HCT116 (cell line): ENCODE measurements at regions of chr5 and their contacts with region 1.

Region 1: DNA sequence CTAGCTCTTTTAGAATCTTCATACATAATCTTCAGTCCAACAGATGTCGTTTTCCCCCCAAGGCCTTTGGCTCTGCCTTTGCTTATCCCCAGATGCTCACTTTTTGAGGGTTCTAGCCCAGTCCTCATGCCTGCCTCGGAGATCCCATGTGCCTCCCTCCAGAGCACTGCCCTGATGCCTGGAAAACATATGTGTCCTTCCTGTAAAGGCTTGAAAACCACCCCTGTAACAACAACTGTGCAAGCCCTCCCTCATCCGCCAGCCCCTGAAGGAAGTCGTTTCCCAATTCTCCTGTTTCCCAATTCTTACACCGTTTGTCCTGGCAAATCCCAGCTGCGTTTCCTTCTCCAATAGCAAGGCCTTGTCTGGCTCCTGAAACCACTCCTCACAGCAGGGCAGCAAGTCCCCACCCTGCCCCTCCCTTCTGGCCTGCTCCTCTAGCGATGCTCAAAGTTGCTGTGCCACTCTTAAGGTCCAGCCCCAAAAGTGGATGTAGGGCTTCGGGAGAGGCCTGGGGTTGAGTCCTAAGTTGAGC is 52.2 kb downstream of the SLC36A1 start:
- DNase-seq: no peak
- ATAC-seq: no peak
- H3K4me3 ChIP-seq: no peak overlapping the region
- H3K27ac ChIP-seq: no peak overlapping the region
- H3K4me1 ChIP-seq: peaks cover 0 to 2% of the 10 kb centered on the region in 2 experiments; a peak in 1 of 4 replicates
- H3K27me3 ChIP-seq: no peaks in the 10 kb centered on the region
- CTCF ChIP-seq: no peak
- POLR2A ChIP-seq: no peak
- RAD21 ChIP-seq: no peak

Region 2: GRCh38 chr5:151280443-151280842 is 219.1 kb before region 1 on chr5:
- CTCF ChIA-PET with region 1: no interaction called
- POLR2A ChIA-PET with region 1: no interaction called
- RAD21 ChIA-PET with region 1: no interaction called
- intact Hi-C with region 1: loop called (anchors 1 kb)
- DNase-seq: no peak
- ATAC-seq: no peak
- H3K4me3 ChIP-seq: no peak overlapping the region
- H3K27ac ChIP-seq: no peak overlapping the region
- H3K4me1 ChIP-seq: no peaks in the 10 kb centered on the region; a peak in 1 of 4 replicates
- H3K27me3 ChIP-seq: no peaks in the 10 kb centered on the region
- CTCF ChIP-seq: no peak
- POLR2A ChIP-seq: no peak
- RAD21 ChIP-seq: no peak

Region 3: DNA sequence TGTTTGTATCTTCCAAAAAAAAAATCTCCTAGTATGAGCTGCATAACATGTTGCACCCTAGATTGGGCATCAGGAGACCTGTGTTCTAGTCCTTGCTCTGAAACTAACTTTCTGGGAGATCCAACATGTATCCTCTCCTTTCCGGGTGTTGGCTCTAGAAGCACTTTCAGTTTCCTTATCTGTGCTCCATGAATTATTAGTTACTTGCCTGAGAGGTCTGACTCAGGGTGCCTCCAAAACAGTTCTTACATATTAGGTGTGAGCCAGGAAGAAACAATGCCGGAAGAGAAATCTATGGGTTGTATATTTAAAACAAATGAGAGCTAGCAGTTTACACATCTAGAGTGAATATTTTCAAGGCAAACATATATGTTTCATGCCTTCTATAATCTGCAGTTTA is 115.5 kb before region 1 on chr5:
- CTCF ChIA-PET with region 1: no interaction called
- POLR2A ChIA-PET with region 1: no interaction called
- RAD21 ChIA-PET with region 1: no interaction called
- intact Hi-C with region 1: loop called (anchors 1 kb)
- DNase-seq: no peak
- ATAC-seq: no peak
- H3K4me3 ChIP-seq: no peak overlapping the region
- H3K27ac ChIP-seq: no peak overlapping the region
- H3K4me1 ChIP-seq: no peaks in the 10 kb centered on the region
- H3K27me3 ChIP-seq: no peaks in the 10 kb centered on the region
- CTCF ChIP-seq: no peak
- POLR2A ChIP-seq: no peak
- RAD21 ChIP-seq: no peak

Region 4: DNA sequence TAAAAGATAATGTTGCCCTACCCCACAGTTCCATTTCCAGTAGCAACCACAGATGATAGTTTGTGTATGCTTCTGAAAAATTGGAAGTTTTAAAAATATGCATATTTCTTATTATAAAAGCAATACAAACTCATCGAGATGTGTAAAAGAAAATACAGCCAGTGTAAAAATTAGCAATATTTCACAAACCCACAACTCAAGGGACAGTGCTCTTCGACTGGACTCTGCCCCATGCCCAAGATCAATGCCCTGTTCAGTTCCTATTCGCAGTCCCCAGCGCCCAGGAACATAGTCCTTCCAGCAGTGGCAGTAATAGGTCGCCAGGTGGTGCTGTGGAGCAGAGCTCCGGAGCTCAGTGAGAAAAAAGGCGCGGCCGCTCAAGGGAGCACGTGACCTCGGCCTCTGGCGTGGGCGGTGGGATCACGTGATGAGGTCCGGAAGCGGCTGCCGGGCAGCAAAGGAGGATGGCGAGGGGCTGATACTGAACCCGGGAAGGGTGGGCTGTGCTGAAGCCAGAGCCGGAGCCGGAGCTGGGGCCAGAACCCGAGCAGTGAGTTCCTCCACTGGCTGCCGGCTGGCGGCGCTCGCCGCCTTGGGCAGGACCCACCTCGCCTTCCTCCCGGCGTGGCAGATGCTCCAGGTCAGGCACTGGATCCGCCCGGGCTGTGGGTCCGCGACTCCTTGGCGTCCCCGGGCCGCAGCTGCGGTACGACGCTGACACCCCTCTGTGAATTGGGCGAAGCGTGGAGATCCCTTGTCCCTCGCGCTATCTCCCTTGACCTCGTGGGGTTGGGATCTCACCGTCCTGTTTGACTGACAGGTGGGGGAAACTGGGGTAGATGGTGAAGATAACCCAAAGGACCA is 52.2 kb before region 1 on chr5 and contains the start of gene SLC36A1:
- CTCF ChIA-PET with region 1: interaction called, 5 read pairs
- POLR2A ChIA-PET with region 1: no interaction called
- RAD21 ChIA-PET with region 1: no interaction called
- intact Hi-C with region 1: loop called (anchors 1 kb)
- DNase-seq: peak; percentile 80
- ATAC-seq: peak; percentile 92
- H3K4me3 ChIP-seq: peak within 1 kb of the TSS; percentile 73 to 77
- H3K27ac ChIP-seq: peak within 1 kb of the TSS; percentile 40
- H3K4me1 ChIP-seq: peaks cover 5 to 24% of the 10 kb centered on the region in 2 experiments; a peak in 3 of 4 replicates
- H3K27me3 ChIP-seq: no peaks in the 10 kb centered on the region
- CTCF ChIP-seq: peak; percentile 92 to 96 (median 94)
- POLR2A ChIP-seq: peak; percentile 59
- RAD21 ChIP-seq: peak; percentile 90
- total RNA-seq, gene SLC36A1: 7.4 TPM